PC-3 (cell line): ENCODE measurements at regions of chr7 and their contacts with region 1.

Region 1: GRCh38 chr7:22559829-22560489 is 60.0 kb upstream of the STEAP1B start:
- DNase-seq: peak; percentile 86
- ATAC-seq: peak; percentile 55
- H3K4me3 ChIP-seq: no peak overlapping the region
- H3K27ac ChIP-seq: peak overlapping the region; percentile 95
- H3K4me1 ChIP-seq: peaks cover 49% of the 10 kb centered on the region
- H3K27me3 ChIP-seq: no peaks in the 10 kb centered on the region
- CTCF ChIP-seq: peak; percentile 95

Region 2: DNA sequence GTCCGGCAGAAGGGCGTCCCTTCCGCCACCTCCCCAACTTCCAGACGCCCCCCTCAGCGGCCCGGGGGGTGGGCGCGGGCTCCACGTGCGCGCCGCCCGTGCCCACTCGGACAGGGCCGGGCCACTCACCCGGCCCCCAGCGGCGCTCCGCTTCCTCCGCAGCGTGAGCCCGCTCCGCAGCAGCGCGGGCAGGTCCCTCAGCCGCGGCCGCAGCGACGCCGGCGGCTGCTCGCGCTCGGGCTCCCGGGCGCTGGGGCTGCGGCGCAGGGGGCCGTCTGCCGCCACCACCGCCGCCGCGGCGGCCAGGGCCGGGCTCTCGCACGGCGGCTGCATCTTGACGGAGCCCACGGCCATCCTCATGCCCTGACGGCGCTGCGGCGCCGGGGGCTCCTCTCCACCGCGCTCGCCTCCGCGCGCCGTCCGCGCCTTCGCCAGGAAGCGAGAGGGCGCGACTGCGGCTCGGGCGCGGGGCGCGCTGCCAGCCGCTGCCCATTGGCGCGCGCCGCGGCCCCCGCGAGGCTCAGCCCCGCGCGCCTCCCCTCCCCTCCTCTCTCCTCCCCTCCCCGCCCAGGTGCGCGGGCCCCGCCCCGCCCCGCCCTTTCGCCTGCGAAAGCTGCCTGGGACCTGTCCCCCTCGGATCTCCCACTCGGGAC is 203.1 kb before region 1 on chr7 and contains the start of gene RAPGEF5:
- CTCF ChIA-PET with region 1: no interaction called
- POLR2A ChIA-PET with region 1: no interaction called
- intact Hi-C with region 1: no loop called
- DNase-seq: peak; percentile 67
- ATAC-seq: peak; percentile 53
- H3K4me3 ChIP-seq: peak within 1 kb of the TSS; percentile 74
- H3K27ac ChIP-seq: peak within 1 kb of the TSS; percentile 31
- H3K4me1 ChIP-seq: peaks cover 34% of the 10 kb centered on the region
- H3K27me3 ChIP-seq: no peaks in the 10 kb centered on the region
- CTCF ChIP-seq: no peak
- total RNA-seq, gene RAPGEF5: 5.6 and 10.8 TPM in 2 replicates

Region 3: GRCh38 chr7:22577396-22578001 is 17.5 kb after region 1 on chr7:
- CTCF ChIA-PET with region 1: interaction called, 9 read pairs
- POLR2A ChIA-PET with region 1: interaction called, 11 read pairs
- intact Hi-C with region 1: loop called (anchors 1 kb)
- DNase-seq: peak; percentile 93
- ATAC-seq: peak; percentile 67
- H3K4me3 ChIP-seq: peak overlapping the region; percentile 24; the same call in 1 of the 2 replicates
- H3K27ac ChIP-seq: peak overlapping the region; percentile 98
- H3K4me1 ChIP-seq: peaks cover 41% of the 10 kb centered on the region
- H3K27me3 ChIP-seq: no peaks in the 10 kb centered on the region
- CTCF ChIP-seq: no peak

Region 4: DNA sequence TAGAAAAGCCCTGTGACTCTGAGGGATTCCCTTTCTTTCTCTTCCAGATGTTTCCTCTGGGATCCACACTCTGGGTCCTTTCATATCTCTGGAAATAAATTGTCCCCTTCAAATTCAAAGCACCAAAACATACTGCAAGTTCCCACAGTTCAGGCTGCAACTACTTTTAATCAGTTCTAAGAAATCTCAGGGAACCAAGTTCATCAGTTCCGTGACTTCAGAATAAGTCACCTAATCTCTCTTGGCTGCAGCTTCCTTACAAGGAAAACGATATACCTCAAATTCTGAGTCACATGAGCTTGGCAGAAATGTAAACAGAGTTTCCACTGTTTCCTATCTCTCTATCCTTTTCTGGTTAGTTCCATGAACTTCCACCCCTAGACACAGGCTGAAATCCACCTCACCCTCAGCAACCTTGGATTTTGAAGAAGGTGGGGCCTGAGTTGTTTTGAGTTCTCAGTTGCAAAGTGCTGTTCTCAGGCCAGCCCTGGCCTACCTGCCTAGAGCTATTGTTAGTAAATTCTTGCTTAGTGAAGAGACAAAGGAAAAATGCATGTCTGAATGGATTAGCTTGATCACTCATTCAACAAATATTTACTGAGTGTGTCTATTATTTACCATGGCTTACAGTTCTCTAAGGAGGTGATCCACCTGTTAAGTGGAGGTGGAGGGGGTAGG is 107.7 kb after region 1 on chr7:
- CTCF ChIA-PET with region 1: interaction called, 5 read pairs
- POLR2A ChIA-PET with region 1: no interaction called
- intact Hi-C with region 1: loop called (anchors 1 kb)
- DNase-seq: peak; percentile 93
- ATAC-seq: peak; percentile 80
- H3K4me3 ChIP-seq: peak overlapping the region; percentile 20; the same call in 1 of the 2 replicates
- H3K27ac ChIP-seq: peak overlapping the region; percentile 99
- H3K4me1 ChIP-seq: peaks cover 55% of the 10 kb centered on the region
- H3K27me3 ChIP-seq: no peaks in the 10 kb centered on the region
- CTCF ChIP-seq: no peak

Region 5: GRCh38 chr7:22732556-22733126 is 172.7 kb after region 1 on chr7:
- CTCF ChIA-PET with region 1: interaction called, 88 read pairs
- POLR2A ChIA-PET with region 1: interaction called, 9 read pairs
- intact Hi-C with region 1: loop called (anchors 1 kb)
- DNase-seq: peak; percentile 76
- ATAC-seq: peak; percentile 64
- H3K4me3 ChIP-seq: no peak overlapping the region
- H3K27ac ChIP-seq: peak overlapping the region; percentile 45
- H3K4me1 ChIP-seq: peaks cover 36% of the 10 kb centered on the region
- H3K27me3 ChIP-seq: no peaks in the 10 kb centered on the region
- CTCF ChIP-seq: peak; percentile 76

Region 6: GRCh38 chr7:22854158-22855048 is 294.4 kb after region 1 on chr7:
- CTCF ChIA-PET with region 1: no interaction called
- POLR2A ChIA-PET with region 1: no interaction called
- intact Hi-C with region 1: loop called (anchors 10 kb)
- DNase-seq: peak; percentile 86
- ATAC-seq: peak; percentile 72
- H3K4me3 ChIP-seq: peak overlapping the region; percentile 87
- H3K27ac ChIP-seq: peak overlapping the region; percentile 79
- H3K4me1 ChIP-seq: peaks cover 38% of the 10 kb centered on the region
- H3K27me3 ChIP-seq: no peaks in the 10 kb centered on the region
- CTCF ChIP-seq: no peak

Region 7: DNA sequence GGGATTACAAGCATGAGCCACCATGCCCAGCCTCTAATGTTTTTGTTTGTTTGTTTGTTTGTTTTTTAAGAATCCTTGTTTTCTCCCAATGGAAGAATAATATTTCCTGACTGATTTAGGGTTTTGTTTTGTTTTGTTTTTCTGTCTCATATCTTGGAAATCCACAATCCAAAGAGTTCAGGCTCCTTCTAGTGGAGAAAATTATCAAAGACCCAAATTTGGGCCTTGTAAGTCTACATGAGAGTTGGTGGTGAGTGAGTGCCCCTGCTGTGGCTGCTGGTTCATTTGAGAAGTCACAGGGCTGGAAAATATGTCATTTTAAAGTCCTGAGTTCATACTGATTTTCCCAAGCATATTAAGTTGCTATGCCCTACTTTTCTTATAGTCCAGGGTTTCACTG is 512.1 kb after region 1 on chr7:
- CTCF ChIA-PET with region 1: interaction called, 13 read pairs
- POLR2A ChIA-PET with region 1: no interaction called
- intact Hi-C with region 1: no loop called
- DNase-seq: peak; percentile 24
- ATAC-seq: 0 out of 2 replicates have a peak, but pooled peaks have one; percentile 25
- H3K4me3 ChIP-seq: no peak overlapping the region
- H3K27ac ChIP-seq: no peak overlapping the region
- H3K4me1 ChIP-seq: peaks cover 21% of the 10 kb centered on the region
- H3K27me3 ChIP-seq: no peaks in the 10 kb centered on the region
- CTCF ChIP-seq: peak; percentile 44; the same call in 1 of the 2 replicates